PC-9 (cell line): ENCODE measurements at regions of chr22 and their contacts with region 1.

Region 1: GRCh38 chr22:20531315-20532201 is 24.1 kb downstream of the MED15 start:
- DNase-seq: peak; percentile 85 to 91
- H3K4me3 ChIP-seq: peak overlapping the region; percentile 33; the same call in 1 of the 2 replicates
- H3K27ac ChIP-seq: peak overlapping the region; percentile 97
- H3K4me1 ChIP-seq: peaks cover 56% of the 10 kb centered on the region
- H3K27me3 ChIP-seq: no peaks in the 10 kb centered on the region
- CTCF ChIP-seq: no peak

Region 2: DNA sequence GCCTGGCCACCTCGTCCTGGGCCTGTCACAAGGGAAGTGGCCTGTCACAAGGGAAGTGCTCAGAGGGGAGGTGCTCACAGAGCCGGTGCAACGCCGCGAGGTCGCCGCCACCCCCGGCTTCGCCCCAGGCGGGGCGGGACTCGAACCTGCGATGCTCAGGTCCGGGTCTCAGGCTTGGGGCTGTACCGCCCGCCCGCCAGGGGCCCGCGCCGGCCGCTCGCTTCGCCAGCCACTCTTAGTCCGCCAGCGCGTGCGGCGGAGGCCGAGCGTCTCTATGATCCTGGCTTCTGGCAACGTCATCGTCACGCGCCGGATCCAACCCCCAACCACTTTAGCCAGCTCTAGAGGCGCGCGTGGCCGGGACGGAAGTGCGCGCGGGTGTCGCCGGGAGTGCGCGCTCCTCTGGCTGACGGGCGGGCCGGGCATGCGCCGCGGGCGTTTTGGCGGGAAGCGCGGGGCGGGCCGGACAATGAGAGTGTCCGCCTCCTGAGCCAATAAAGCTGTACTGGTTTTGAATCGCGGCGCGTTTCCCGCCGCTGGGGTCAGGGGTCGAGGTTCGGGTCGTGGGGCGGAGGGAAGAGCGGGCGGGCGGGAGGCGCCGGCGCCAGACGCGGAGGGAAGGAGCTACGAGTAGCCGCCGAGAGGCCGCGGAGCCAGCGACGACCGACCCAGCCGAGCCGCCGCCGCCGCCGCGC is 414.5 kb before region 1 on chr22 and contains the start of gene TRMT2A:
- CTCF ChIA-PET with region 1: no interaction called
- POLR2A ChIA-PET with region 1: no interaction called
- intact Hi-C with region 1: no loop called
- DNase-seq: peak; percentile 80 to 95
- H3K4me3 ChIP-seq: peak within 1 kb of the TSS; percentile 75
- H3K27ac ChIP-seq: 0 out of 2 replicates have a peak within 1 kb of the TSS, but pooled peaks have one; percentile 28
- H3K4me1 ChIP-seq: peaks cover 9% of the 10 kb centered on the region; the same call in 1 of the 2 replicates
- H3K27me3 ChIP-seq: no peaks in the 10 kb centered on the region
- CTCF ChIP-seq: no peak
- total RNA-seq, gene TRMT2A: 31.5 and 32.7 TPM in 2 replicates

Region 3: GRCh38 chr22:20495861-20496681 is 35.5 kb before region 1 on chr22:
- CTCF ChIA-PET with region 1: no interaction called
- POLR2A ChIA-PET with region 1: no interaction called
- intact Hi-C with region 1: loop called (anchors 1 kb)
- DNase-seq: peak; percentile 66 to 88
- H3K4me3 ChIP-seq: peak overlapping the region; percentile 78
- H3K27ac ChIP-seq: peak overlapping the region; percentile 73
- H3K4me1 ChIP-seq: no peaks in the 10 kb centered on the region
- H3K27me3 ChIP-seq: no peaks in the 10 kb centered on the region
- CTCF ChIP-seq: peak; percentile 83

Region 4: GRCh38 chr22:20507253-20508066 is 24.1 kb before region 1 on chr22 and contains the start of gene MED15:
- CTCF ChIA-PET with region 1: no interaction called
- POLR2A ChIA-PET with region 1: interaction called, 29 read pairs
- intact Hi-C with region 1: loop called (anchors 1 kb)
- DNase-seq: peak; percentile 74 to 76
- H3K4me3 ChIP-seq: peak within 1 kb of the TSS; percentile 66
- H3K27ac ChIP-seq: peak within 1 kb of the TSS; percentile 98
- H3K4me1 ChIP-seq: peaks cover 35% of the 10 kb centered on the region
- H3K27me3 ChIP-seq: no peaks in the 10 kb centered on the region
- CTCF ChIP-seq: no peak
- total RNA-seq, gene MED15: 82.0 and 87.9 TPM in 2 replicates

Region 5: DNA sequence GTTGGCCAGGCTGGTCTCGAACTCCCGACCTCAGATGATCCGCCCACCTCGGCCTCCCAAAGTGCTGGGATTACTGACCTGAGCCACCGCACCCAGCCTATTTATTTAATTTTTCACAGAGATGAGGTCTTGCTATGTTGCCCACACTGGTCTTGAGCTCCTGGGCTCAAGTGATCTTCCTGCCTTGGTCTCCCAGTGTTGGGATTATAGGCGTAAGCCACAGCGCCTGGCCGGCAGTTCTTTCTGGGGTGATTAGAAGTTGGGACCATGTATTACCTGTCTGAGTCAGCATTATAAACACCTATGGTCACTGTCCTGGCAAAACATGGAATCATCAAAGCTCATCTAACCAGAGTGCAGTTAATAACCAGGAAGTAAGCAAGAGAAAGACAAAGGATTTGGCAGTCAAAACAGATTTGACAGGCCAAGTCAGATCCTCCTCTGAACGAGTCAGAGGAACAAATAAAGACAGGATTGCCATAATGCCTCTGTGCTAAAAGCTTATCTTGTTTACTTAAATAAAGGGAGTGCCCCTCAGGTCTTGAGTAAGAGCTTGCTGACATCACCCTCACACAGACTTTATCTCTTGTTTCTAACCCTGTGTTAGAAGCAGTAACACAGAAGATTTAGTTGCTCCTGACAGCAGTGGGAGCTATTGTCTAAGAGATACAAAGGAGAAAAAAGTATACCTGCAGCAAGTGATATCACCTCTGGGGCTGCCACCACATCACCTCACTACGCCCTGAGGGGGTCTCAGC is 246.0 kb after region 1 on chr22:
- CTCF ChIA-PET with region 1: no interaction called
- POLR2A ChIA-PET with region 1: no interaction called
- intact Hi-C with region 1: no loop called
- DNase-seq: peak; percentile 22 to 98
- H3K4me3 ChIP-seq: no peak overlapping the region
- H3K27ac ChIP-seq: peak overlapping the region; percentile 57
- H3K4me1 ChIP-seq: peaks cover 55% of the 10 kb centered on the region
- H3K27me3 ChIP-seq: no peaks in the 10 kb centered on the region
- CTCF ChIP-seq: no peak; the same call in 1 of the 2 replicates